Mammary epithelial cell (primary cell): ENCODE measurements at regions of chr17 and their contacts with region 1.

Region 1: DNA sequence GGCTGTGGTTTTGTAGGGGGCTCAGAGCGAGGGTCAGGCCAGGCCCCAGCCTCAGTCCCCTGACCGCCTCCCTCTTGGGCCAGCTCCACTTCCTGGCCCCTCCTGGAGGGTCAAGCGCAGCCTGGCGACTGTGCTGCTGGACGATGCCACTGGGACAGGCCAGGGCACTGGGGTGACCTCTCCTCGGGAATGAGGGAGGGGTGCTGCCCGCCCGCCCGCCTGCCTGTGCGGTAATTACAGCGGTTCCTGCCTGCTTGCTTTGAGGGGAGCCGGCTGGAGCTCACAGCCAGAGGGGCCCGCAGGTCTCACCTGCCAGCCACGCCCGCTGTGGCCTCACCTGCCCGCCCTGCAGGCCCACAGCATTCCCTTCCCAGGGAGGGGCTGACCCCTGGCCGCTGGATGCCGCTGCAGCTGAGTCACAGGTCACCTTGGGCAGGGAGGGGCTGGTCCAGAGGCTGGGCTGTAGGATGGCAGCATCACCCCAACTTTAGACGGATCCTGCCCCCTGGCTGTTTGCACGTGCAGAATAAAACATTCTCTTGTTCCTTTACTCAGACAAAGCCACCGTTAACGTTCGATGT is 76.7 kb upstream of the CBX4 start:
- DNase-seq: peak; percentile 37
- H3K4me3 ChIP-seq: no peak overlapping the region
- H3K27ac ChIP-seq: no peak overlapping the region
- H3K4me1 ChIP-seq: peaks cover 21% of the 10 kb centered on the region
- H3K27me3 ChIP-seq: no peaks in the 10 kb centered on the region
- CTCF ChIP-seq: peak in 1 of 2 donors; percentile 32

Region 2: GRCh38 chr17:79749156-79749815 is 166.7 kb before region 1 on chr17:
- CTCF ChIA-PET with region 1: no interaction called
- dilution Hi-C with region 1: no loop called
- in situ Hi-C with region 1: no loop called
- intact Hi-C with region 1: loop called (anchors 5 kb)
- DNase-seq: peak; percentile 27
- H3K4me3 ChIP-seq: no peak overlapping the region
- H3K27ac ChIP-seq: no peak overlapping the region
- H3K4me1 ChIP-seq: no peaks in the 10 kb centered on the region
- H3K27me3 ChIP-seq: peaks cover 25% of the 10 kb centered on the region
- CTCF ChIP-seq: no peak

Region 3: GRCh38 chr17:79789534-79790353 is 126.2 kb before region 1 on chr17:
- CTCF ChIA-PET with region 1: no interaction called
- dilution Hi-C with region 1: no loop called
- in situ Hi-C with region 1: no loop called
- intact Hi-C with region 1: loop called (anchors 1 kb)
- DNase-seq: no peak
- H3K4me3 ChIP-seq: peak overlapping the region in 2 of 3 experiments; percentile 12 to 19
- H3K27ac ChIP-seq: no peak overlapping the region
- H3K4me1 ChIP-seq: peaks cover 14% of the 10 kb centered on the region
- H3K27me3 ChIP-seq: peaks cover 24% of the 10 kb centered on the region
- CTCF ChIP-seq: peak; percentile 31 to 62

Region 4: DNA sequence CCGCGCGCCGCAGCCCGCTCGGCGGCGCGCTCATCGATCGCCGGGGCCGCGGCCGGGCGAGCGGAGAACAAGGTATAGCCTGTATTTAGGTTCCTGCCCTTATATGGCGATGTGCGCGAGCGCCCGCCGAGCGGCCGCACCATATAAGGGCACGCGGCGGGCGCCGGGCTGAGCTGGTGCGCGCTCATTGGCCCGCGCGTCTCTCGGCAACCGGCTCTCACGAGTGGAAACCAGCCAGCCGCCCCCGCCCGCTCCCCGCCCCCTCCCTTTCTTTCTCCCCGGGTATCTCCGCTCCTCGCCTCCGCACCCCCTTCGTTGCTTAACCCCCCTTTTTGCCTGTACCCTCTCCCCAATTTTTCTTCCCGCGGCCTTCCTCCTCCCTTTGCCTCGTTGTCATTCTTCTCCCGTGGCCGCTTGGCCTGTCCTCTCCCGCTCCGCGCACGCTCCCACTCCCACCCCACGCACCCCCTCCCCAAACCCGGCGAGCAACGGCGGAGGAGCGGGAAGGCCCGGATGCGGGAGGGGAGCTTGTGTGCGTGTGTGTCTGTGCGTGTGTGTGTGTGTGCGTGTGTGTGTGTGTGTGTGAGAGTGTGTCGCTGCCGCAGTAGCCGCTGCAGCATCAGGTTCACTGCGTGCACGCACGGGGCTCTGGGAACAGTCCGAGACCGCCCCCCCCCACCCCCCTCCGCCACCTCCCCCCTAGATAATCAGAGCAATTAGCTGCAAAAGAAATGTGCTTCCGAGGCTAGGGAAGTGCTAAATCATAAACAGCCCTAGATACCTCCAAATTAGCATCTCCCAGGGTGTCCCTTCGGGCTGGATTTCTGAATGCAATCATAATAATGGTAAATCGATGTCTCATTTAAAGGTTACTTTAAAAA is 105.6 kb before region 1 on chr17:
- CTCF ChIA-PET with region 1: interaction called, 5 read pairs
- dilution Hi-C with region 1: no loop called
- in situ Hi-C with region 1: no loop called
- intact Hi-C with region 1: loop called (anchors 1 kb)
- DNase-seq: peak; percentile 80
- H3K4me3 ChIP-seq: peak overlapping the region in 2 of 3 experiments; percentile 9 to 42
- H3K27ac ChIP-seq: no peak overlapping the region
- H3K4me1 ChIP-seq: peaks cover 40% of the 10 kb centered on the region
- H3K27me3 ChIP-seq: peaks cover 25% of the 10 kb centered on the region
- CTCF ChIP-seq: no peak

Region 5: DNA sequence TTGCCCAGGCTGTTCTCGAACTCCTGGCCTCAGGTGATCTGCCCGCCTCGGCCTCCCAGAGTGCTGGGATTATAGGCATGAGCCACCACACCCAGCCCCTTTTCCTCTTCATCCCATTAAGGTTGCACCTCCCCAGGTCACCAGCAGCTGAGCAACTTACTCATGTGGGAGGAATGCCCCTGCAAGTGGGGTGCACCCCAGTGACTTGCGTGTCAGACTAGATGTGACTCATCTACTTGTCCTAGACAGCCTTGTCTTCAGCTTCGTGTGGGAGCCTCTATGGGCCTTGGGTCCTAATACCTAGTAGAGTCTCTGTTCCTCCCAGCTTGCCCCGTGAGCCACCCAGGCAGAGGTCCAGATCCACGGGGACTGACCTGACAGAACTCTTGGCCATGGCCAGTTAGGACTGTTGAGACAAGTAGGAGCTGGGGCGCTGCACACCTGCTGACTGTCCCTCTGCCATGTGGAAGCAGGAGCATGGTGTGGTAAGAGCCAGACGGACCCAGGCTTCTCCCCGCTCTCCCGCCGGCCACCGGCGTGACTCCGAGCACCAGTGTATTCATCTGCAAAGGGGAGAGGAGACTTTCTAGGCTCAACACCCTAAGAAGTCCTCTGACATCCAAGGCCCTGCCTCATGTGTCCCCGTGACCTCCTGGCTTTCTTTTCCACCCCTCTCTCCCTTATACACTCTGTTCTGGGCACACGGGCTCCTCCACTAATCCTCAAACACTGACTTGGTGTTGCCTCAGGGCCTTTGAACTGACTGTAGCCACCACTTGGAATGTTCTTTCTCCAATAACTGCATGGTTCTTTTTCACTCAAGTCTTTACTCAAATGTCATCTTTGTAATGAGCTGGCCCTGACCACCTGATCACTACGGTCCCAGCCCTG is 65.1 kb before region 1 on chr17:
- CTCF ChIA-PET with region 1: no interaction called
- dilution Hi-C with region 1: no loop called
- in situ Hi-C with region 1: loop called in 1 of 2 experiments (anchors 10 kb)
- intact Hi-C with region 1: no loop called
- DNase-seq: peak; percentile 90
- H3K4me3 ChIP-seq: no peak overlapping the region
- H3K27ac ChIP-seq: peak overlapping the region; percentile 19
- H3K4me1 ChIP-seq: peaks cover 23% of the 10 kb centered on the region
- H3K27me3 ChIP-seq: no peaks in the 10 kb centered on the region
- CTCF ChIP-seq: no peak